HCT116 (cell line): ENCODE measurements at regions of chr3 and their contacts with region 1.

Region 1: GRCh38 chr3:12663936-12664908 is at the start of gene RAF1:
- DNase-seq: peak; percentile 95
- ATAC-seq: peak; percentile 93
- H3K4me3 ChIP-seq: peak within 1 kb of the TSS; percentile 90 to 97
- H3K27ac ChIP-seq: peak within 1 kb of the TSS; percentile 94
- H3K4me1 ChIP-seq: peaks cover 24 to 35% of the 10 kb centered on the region in 2 experiments
- H3K27me3 ChIP-seq: no peaks in the 10 kb centered on the region
- CTCF ChIP-seq: no peak
- POLR2A ChIP-seq: peak; percentile 90
- RAD21 ChIP-seq: no peak
- total RNA-seq, gene RAF1: 64.3 TPM

Region 2: DNA sequence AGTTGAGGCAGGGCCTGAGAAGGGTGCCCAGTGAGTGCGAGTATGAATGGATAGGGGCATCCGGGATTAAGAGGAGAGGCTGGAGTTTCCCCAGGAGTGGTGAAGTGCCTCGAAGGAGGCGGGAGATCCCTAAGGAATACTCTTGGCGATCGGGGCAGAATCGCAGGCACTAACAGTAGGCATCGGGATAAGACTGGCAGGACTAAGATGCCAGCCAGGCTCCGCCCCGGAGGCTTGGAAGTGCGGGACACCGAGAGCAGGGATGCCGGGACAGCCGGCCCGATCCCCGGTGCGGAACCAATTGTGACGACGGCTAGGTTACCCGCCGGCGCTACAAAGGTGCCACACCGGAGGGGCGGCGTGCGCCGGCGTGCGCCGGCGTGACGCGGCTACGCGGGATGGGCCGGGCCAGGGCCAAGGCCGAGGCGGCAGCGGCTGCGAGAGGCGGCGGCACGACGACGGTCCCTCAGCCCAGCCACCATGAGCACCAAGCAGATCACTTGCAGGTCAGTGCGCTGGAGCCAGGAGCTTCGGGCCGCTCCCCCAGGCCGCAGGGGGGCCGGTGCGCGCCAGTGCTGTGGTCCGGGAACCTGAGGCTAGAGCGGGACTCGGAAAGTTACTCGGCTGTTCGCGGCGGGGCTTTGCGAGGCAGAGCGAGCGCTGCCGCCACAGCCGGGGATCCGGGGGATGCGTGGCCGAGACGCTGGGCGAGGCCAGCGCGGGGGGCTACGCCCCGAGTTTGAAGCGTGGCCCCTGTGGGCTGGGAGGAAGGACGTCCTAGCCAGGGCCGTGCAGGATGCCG is 107.3 kb before region 1 on chr3 and contains the start of gene MKRN2:
- CTCF ChIA-PET with region 1: no interaction called
- POLR2A ChIA-PET with region 1: no interaction called
- RAD21 ChIA-PET with region 1: no interaction called
- intact Hi-C with region 1: loop called (anchors 5 kb)
- DNase-seq: peak; percentile 71
- ATAC-seq: peak; percentile 96
- H3K4me3 ChIP-seq: peak within 1 kb of the TSS; percentile 86 to 95
- H3K27ac ChIP-seq: peak within 1 kb of the TSS; percentile 77
- H3K4me1 ChIP-seq: peaks cover 3 to 20% of the 10 kb centered on the region in 2 experiments; a peak in 3 of 4 replicates
- H3K27me3 ChIP-seq: no peaks in the 10 kb centered on the region
- CTCF ChIP-seq: no peak
- POLR2A ChIP-seq: peak; percentile 96
- RAD21 ChIP-seq: no peak
- total RNA-seq, gene MKRN2: 27.9 TPM